ENCODE measurements at regions of chr17 and their contacts with region 1.

Region 1: GRCh38 chr17:49315551-49316257 is 46.3 kb downstream of the ZNF652 start:
- DNase-seq: peak; percentile 85
- H3K4me3 Mint-ChIP-seq: no peak overlapping the region
- H3K27ac Mint-ChIP-seq: no peak overlapping the region
- H3K4me1 Mint-ChIP-seq: peaks cover 20% of the 10 kb centered on the region
- H3K27me3 Mint-ChIP-seq: no peaks in the 10 kb centered on the region
- CTCF ChIP-seq: peak; percentile 89

Region 2: DNA sequence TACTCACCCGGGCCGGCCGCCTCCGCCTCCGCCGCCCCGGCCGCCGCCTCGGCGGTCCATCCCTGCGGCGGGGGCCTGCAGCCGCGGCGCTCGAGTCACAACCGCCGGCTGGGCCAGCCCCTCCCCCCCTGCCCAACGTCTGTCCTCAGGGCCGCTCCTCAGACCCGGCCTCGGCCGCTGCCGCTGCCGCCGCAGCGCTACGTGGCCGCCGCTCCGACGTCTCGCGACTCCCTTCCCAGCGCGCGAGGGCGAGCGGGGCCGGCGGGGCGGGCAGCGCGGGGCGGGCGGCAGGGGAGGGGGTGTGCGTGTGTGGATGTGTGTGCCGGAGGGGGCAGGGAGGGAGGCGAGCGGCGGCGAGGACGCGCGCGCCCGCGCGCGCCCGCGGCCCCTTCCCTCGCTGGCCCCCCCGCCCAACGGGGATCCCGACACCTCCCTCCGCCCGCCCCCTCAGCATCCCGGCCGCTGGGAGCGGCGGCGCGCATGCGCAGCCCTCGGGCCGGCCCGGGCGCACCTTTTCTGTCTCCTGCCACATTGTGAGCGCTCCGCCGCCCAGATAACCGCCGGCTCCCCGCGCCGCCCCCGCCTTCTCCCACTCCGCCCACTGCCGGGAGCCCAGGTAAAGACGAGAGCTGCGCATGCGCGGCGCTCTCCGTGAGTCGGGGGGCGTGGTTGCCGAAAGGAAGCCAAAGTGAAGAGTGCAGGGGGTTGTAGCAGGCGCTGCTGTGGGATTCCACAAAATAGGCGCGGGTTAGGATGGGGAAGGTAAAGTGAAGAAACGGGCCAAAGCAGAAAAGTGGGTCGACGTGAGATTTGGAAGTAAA is 46.4 kb after region 1 on chr17 and contains the start of gene ZNF652:
- CTCF ChIA-PET with region 1: interaction called, 3 read pairs
- intact Hi-C with region 1: loop called (anchors 2 kb)
- DNase-seq: peak; percentile 100
- H3K4me3 Mint-ChIP-seq: peak within 1 kb of the TSS; percentile 74
- H3K27ac Mint-ChIP-seq: peak within 1 kb of the TSS; percentile 88
- H3K4me1 Mint-ChIP-seq: peaks cover 36% of the 10 kb centered on the region
- H3K27me3 Mint-ChIP-seq: no peaks in the 10 kb centered on the region
- CTCF ChIP-seq: no peak
- total RNA-seq, gene ZNF652: 41.9 and 42.8 TPM in 2 replicates

Region 3: DNA sequence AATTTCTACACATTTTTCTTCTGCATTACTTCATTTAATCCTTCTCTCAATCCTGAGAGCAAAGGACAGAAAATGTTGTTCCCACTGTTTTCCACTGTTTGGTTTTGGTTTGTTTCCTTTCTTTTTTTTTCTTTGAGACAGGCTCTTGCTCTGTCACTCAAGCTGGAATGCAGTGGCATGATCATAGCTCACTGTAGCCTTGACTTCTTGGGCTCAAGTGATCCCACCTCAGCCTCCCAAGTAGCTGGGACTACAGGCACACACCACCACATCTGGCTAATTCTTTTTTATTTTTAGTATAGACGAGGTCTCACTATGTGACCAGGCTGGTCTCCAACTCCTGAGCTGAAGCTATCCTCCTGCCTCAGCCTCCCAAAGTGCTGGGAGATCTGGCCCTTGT is 53.4 kb after region 1 on chr17:
- CTCF ChIA-PET with region 1: interaction called, 3 read pairs
- intact Hi-C with region 1: loop called (anchors 2 kb)
- DNase-seq: no peak
- H3K4me3 Mint-ChIP-seq: no peak overlapping the region
- H3K27ac Mint-ChIP-seq: no peak overlapping the region
- H3K4me1 Mint-ChIP-seq: no peaks in the 10 kb centered on the region
- H3K27me3 Mint-ChIP-seq: no peaks in the 10 kb centered on the region
- CTCF ChIP-seq: no peak

Region 4: DNA sequence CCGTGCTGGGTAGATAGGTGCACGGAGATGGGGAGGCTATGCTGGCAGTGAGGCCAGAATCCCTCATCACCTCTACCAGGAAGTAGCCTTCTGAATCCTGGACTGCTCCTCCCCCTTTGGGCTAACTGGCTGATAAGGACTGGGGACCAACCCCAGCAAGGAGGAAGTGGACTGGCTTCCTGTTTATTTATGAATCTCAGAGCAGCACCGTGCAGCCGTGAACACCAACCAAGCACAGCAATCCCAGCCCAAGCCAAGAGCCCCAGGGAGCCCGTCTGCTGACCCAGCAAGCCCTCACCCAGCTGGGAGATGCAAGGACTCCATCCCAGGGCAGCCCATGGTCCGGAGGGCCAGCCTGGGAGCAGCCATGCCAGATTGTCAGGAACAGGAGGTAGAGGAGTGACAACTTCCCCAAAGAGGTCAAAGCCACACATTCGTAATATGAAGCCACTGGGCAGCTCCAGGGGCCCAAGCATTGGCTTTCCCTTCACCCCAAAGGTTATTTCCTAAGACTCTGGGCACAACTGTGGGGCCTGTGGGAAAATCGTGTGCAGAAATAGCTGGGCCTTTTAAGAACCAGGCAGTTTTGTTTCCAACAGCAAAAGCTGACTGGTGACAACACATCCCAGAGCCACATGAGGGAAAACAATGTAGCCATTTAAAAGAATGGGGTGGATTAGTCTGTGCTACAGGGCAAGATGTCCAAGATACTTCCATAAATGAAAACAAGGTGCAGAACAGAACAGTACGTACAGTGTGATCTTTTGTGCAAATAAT is 75.0 kb after region 1 on chr17:
- CTCF ChIA-PET with region 1: interaction called, 5 read pairs
- intact Hi-C with region 1: loop called (anchors 1 kb)
- DNase-seq: peak; percentile 52
- H3K4me3 Mint-ChIP-seq: no peak overlapping the region
- H3K27ac Mint-ChIP-seq: peak overlapping the region; percentile 2
- H3K4me1 Mint-ChIP-seq: peaks cover 14% of the 10 kb centered on the region
- H3K27me3 Mint-ChIP-seq: peaks cover 13% of the 10 kb centered on the region
- CTCF ChIP-seq: no peak

Region 5: GRCh38 chr17:49548506-49549310 is 233.0 kb after region 1 on chr17:
- CTCF ChIA-PET with region 1: no interaction called
- intact Hi-C with region 1: loop called (anchors 2 kb)
- DNase-seq: peak; percentile 79
- H3K4me3 Mint-ChIP-seq: no peak overlapping the region
- H3K27ac Mint-ChIP-seq: no peak overlapping the region
- H3K4me1 Mint-ChIP-seq: no peaks in the 10 kb centered on the region
- H3K27me3 Mint-ChIP-seq: peaks cover 49% of the 10 kb centered on the region
- CTCF ChIP-seq: peak; percentile 69